Activated CD4-positive, alpha-beta memory T cell treated with anti-CD3 and anti-CD28 coated beads for 36 hours (primary cell): ENCODE measurements at regions of chr9 and their contacts with region 1.

Region 1: DNA sequence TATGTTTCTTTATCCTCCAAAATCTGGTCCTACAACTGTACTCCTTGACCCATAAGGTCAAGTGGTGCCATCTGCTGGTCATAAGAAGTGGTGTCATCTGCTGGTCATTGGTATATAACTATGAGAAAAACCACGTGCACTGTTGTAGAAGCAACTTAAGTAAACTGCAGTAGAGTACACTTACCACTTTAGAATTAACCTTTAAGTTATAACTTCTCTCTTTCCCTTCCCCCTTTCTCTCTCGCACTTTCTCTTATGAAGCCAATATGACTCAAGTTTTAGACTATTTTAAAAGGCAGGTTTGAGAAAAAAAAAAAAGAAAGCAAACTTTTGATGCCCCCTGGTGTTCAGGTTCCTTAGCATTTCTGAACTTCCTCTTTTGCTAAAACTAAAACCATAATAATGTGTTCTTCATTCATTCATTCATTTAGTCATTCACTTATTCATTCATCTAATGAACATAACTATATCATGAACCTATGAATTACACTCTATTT is 12.8 kb upstream of the MTAP start:
- DNase-seq: peak; percentile 59
- H3K4me3 Mint-ChIP-seq: peak overlapping the region; percentile 40
- H3K27ac Mint-ChIP-seq: no peak overlapping the region
- H3K4me1 Mint-ChIP-seq: no peaks in the 10 kb centered on the region
- H3K27me3 Mint-ChIP-seq: peaks cover 8% of the 10 kb centered on the region

Region 2: GRCh38 chr9:21317956-21318923 is 471.3 kb before region 1 on chr9:
- CTCF ChIA-PET with region 1: interaction called, 3 read pairs
- POLR2A ChIA-PET with region 1: no interaction called
- intact Hi-C with region 1: loop called (anchors 1 kb)
- DNase-seq: peak; percentile 48
- H3K4me3 Mint-ChIP-seq: no peak overlapping the region
- H3K27ac Mint-ChIP-seq: no peak overlapping the region
- H3K4me1 Mint-ChIP-seq: peaks cover 1% of the 10 kb centered on the region
- H3K27me3 Mint-ChIP-seq: no peaks in the 10 kb centered on the region

Region 3: DNA sequence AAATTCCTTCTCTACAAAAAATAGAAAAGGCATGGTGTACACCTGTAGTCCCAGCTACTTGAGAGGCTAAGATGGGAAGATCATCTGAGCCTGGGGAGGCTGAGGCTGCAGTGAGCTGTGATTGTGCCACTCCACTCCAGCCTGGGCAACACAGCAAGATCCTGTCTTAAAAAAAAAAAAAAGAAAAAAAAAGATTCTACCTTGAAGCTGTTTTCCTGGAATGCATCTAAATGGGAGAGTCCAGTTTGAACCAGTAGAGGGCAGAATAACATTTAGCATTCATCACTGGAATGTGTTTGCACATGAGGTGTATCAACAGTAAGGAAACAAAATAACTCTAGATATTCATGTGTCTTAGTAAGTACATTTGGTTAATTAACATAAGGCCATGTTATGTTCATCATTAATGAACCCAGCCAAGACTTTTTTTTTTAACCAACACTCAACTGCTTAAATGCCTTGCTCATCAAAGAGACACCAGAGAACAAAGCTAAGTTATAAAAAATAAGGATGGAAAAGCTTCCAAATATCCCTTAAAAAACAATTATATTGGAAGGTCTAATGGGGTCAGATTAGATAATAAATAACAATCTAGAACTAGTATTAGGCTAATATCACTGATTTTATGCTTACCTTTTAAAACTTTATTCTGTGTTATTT is 323.6 kb before region 1 on chr9:
- CTCF ChIA-PET with region 1: interaction called, 56 read pairs
- POLR2A ChIA-PET with region 1: no interaction called
- intact Hi-C with region 1: loop called (anchors 1 kb)
- DNase-seq: no peak
- H3K4me3 Mint-ChIP-seq: no peak overlapping the region
- H3K27ac Mint-ChIP-seq: no peak overlapping the region
- H3K4me1 Mint-ChIP-seq: no peaks in the 10 kb centered on the region
- H3K27me3 Mint-ChIP-seq: peaks cover 4% of the 10 kb centered on the region

Region 4: GRCh38 chr9:21709464-21710058 is 80.0 kb before region 1 on chr9:
- CTCF ChIA-PET with region 1: interaction called, 41 read pairs
- POLR2A ChIA-PET with region 1: no interaction called
- intact Hi-C with region 1: loop called (anchors 1 kb)
- DNase-seq: peak; percentile 65
- H3K4me3 Mint-ChIP-seq: no peak overlapping the region
- H3K27ac Mint-ChIP-seq: no peak overlapping the region
- H3K4me1 Mint-ChIP-seq: peaks cover 7% of the 10 kb centered on the region
- H3K27me3 Mint-ChIP-seq: no peaks in the 10 kb centered on the region

Region 5: DNA sequence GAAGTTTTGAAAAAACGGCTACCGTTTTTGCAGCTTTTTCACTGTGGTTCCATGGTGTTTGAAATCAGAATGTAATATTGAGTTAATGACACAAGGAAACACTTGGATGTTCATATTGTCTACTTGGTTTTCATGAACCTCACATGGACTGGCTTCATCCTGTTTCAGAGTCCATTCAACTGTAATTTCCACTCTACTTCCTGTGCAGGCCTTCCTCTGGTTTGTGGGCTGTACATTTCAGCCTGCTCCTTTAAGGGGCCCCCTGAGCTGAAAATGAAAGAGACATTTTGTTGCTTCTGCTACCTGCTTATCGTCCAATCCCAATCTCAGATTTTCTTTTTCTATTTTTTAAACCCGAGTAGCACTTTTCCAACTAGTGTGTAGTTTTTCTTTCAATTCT is 261.3 kb after region 1 on chr9:
- CTCF ChIA-PET with region 1: no interaction called
- POLR2A ChIA-PET with region 1: no interaction called
- intact Hi-C with region 1: no loop called
- DNase-seq: no peak
- H3K4me3 Mint-ChIP-seq: no peak overlapping the region
- H3K27ac Mint-ChIP-seq: no peak overlapping the region
- H3K4me1 Mint-ChIP-seq: peaks cover 34% of the 10 kb centered on the region
- H3K27me3 Mint-ChIP-seq: peaks cover 15% of the 10 kb centered on the region